Breast epithelium (tissue), 4 donors: ENCODE measurements at regions of chr18 and their contacts with region 1.

Region 1: GRCh38 chr18:58785171-58785805 is 79.4 kb upstream of the ZNF532 start:
- DNase-seq: peak; percentile 61 to 87
- H3K4me3 ChIP-seq: no peak overlapping the region
- H3K27ac ChIP-seq: peak overlapping the region; percentile 76 to 78
- H3K4me1 ChIP-seq: no peaks in the 10 kb centered on the region
- H3K27me3 ChIP-seq: no peaks in the 10 kb centered on the region
- CTCF ChIP-seq: peak in 2 of 3 donors; percentile 8
- POLR2A ChIP-seq: no peak

Region 2: DNA sequence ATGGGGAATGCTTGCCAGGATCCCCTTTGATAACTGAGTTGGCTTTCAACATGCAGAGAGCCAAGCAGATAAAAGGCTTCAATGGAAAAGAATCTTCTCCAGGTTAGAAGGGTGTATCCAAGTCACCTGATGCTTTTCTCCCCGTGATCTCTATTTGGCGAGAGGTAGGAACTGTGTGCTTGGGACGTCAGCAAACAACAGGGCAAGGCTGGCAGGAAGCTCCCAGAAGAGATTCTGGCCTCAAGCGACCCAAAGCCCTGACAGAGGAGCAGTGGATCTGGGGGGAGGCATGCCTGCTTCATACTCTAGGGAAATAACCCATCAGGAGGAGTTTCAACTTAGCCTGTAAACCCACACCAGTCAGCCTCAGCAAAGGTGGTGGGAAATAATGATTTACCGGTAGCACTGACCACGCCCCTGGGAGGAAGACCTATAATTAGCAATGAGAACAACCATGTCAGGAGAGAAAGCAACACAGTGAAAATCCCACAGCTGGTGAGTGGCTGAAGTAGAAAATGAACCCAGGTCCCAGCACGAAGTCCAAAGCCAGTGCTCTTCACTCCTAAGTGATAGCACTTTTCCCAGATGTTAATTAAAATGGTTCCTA is 278.1 kb after region 1 on chr18:
- intact Hi-C with region 1: loop called (anchors 5 kb)
- DNase-seq: no peak
- H3K4me3 ChIP-seq: no peak overlapping the region
- H3K27ac ChIP-seq: no peak overlapping the region
- H3K4me1 ChIP-seq: no peaks in the 10 kb centered on the region
- H3K27me3 ChIP-seq: no peaks in the 10 kb centered on the region
- CTCF ChIP-seq: no peak
- POLR2A ChIP-seq: no peak